MCF 10A (cell line): ENCODE measurements at regions of chr2 and their contacts with region 1.

Region 1: DNA sequence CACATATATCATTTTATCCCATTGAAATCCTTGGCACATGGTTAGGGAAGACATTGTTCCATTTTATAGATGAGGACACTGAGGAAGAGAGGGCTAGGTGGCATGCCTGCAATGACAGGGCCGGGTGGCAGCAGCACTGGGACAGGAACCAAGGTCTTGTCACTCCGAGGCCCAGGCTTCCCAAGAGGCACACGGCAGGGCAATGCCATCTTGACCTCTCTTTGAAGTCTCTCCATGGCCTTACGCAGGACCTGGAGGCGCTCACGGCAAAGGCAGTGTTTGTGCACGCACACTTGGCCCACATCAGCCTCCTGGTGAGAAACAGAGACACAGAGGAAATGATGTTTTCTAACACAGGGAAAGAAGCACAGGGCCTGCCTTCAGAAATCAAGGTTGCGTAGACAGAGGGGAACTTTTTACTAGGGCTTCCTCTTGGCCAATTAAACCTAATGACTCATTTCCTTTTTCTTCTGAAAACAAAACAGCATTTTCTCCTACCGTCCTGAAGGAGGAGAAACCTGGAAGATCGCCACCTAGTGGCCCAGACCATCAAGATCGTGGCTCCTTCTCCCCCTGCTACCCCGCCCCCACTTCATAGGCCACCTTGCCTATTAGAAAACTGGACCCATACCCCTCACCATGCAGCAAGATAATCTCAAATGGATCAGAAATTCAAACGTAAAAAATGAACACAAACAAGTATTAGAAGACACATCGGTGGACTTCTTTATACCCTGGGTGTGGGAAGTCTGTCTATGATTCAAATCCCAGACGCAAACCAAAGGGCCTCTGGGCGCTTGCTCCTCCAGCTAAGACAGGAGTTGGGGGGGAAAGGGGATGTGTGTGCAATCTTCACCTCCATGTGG is 74.6 kb upstream of the SP3 start:
- DNase-seq: peak; percentile 96
- H3K4me3 Mint-ChIP-seq: peak overlapping the region; percentile 31
- H3K27ac Mint-ChIP-seq: peak overlapping the region; percentile 92
- H3K4me1 Mint-ChIP-seq: peaks cover 17% of the 10 kb centered on the region
- H3K27me3 Mint-ChIP-seq: no peaks in the 10 kb centered on the region
- CTCF ChIP-seq: peak; percentile 80

Region 2: DNA sequence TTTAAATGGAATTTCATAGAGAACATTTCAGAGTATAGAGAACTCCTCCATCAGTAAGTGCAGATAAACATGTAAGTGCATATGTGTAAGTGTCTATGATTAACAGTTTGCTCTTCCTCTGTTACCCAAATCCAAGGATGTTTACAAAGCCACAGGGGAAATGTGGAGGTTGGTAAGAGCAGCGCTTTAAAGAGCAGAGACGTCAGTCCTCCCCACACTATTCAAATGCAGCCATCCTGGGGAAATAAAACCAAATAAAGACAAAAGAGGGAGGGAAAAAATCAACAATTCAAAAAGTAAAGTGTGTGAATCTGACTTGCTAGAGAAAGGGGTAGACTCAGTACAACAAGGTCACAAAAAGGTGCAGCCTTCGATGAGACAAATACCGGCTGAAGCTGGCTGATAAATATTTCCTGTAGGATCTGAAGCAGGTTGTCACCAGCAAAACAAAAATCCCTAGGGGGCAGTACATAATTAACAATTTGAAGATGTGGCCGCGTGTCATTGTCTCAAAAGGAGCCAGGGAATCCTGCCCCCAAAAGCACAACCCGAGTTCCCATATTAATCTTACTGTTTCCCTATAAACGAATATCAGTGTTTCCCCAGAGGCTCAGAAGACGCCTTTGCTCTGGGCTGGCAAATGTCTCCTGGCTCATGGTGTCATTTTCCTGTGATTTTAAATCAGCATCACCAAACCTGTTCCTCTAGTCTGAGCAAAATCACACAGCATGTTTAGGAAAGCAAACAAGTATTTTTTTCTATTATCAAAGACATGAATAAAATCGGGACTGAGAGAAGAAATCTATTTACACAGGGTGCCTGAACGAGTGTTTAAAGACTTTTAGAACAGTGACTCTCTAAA is 468.5 kb before region 1 on chr2:
- CTCF ChIA-PET with region 1: interaction called, 4 read pairs
- POLR2A ChIA-PET with region 1: no interaction called
- intact Hi-C with region 1: loop called (anchors 1 kb)
- DNase-seq: peak; percentile 54
- H3K4me3 Mint-ChIP-seq: no peak overlapping the region
- H3K27ac Mint-ChIP-seq: no peak overlapping the region
- H3K4me1 Mint-ChIP-seq: peaks cover 15% of the 10 kb centered on the region
- H3K27me3 Mint-ChIP-seq: no peaks in the 10 kb centered on the region
- CTCF ChIP-seq: peak; percentile 47

Region 3: GRCh38 chr2:173884025-173884802 is 155.6 kb before region 1 on chr2:
- CTCF ChIA-PET with region 1: no interaction called
- POLR2A ChIA-PET with region 1: interaction called, 3 read pairs
- intact Hi-C with region 1: loop called (anchors 5 kb)
- DNase-seq: peak; percentile 68
- H3K4me3 Mint-ChIP-seq: no peak overlapping the region
- H3K27ac Mint-ChIP-seq: no peak overlapping the region
- H3K4me1 Mint-ChIP-seq: no peaks in the 10 kb centered on the region
- H3K27me3 Mint-ChIP-seq: no peaks in the 10 kb centered on the region
- CTCF ChIP-seq: peak; percentile 67

Region 4: DNA sequence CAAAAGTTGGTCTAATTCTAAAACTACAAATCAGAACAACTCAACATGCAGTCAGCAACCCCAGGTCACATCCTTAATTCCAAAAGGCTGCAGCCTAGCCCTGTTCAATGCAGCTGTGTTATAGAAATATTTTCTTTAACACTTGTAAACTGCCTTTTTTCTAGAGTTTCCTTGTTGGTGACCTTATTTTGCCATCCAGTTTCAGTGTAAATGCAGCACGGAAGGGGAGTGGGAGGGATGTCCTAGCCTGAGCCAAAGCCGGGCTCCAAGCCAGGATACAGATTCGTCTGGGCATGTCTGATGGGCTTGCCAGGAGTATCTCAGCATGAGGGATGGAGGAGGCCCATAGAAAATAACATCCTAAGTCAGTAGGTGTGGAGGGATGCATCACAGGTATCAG is 56.9 kb before region 1 on chr2:
- CTCF ChIA-PET with region 1: interaction called, 4 read pairs
- POLR2A ChIA-PET with region 1: interaction called, 14 read pairs
- intact Hi-C with region 1: no loop called
- DNase-seq: peak; percentile 94
- H3K4me3 Mint-ChIP-seq: no peak overlapping the region
- H3K27ac Mint-ChIP-seq: peak overlapping the region; percentile 79
- H3K4me1 Mint-ChIP-seq: peaks cover 52% of the 10 kb centered on the region
- H3K27me3 Mint-ChIP-seq: no peaks in the 10 kb centered on the region
- CTCF ChIP-seq: no peak